A549 (cell line): ENCODE measurements at regions of chr15 and their contacts with region 1.

Region 1: DNA sequence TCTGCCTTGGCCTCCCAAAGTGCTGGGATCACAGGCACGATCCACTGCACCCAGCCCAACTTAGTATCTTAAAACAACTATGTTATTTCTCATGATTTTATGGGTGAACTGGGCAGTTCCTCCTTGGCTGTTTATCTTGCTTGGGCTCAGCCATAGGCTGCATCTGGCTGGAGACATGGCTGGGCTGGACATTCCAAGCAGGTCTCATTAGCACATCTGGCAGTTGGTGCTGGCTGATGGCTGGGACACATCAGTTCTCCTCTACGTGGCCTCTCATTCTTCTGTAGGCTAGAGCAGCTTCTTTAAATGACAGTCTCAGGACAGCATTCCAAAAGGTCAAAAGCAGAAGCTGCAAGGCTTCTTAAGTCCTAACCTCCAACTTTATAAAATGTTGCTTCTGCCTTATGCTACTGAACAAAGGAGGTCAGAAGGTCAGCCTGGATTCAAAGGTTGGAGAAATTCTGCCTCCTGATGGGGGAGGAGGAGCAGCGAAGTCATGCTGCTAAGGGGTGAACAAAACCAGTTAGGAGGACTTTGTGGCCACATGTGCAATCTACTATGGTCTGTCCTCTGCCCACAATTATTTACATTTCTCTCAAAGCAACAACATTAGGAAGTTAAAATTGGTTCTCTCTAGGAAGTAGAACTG is 144.0 kb downstream of the AQP9 start:
- DNase-seq: no peak
- ATAC-seq: no peak
- H3K4me3 ChIP-seq: no peak overlapping the region
- H3K27ac ChIP-seq: no peak overlapping the region; a peak in 1 of 6 replicates
- H3K4me1 ChIP-seq: 0 out of 3 replicates have a peak, but pooled peaks cover 8% of the 10 kb centered on the region
- CTCF ChIP-seq: no peak
- EP300 ChIP-seq: no peak
- POLR2A ChIP-seq: no peak
- RAD21 ChIP-seq: no peak

Region 2: DNA sequence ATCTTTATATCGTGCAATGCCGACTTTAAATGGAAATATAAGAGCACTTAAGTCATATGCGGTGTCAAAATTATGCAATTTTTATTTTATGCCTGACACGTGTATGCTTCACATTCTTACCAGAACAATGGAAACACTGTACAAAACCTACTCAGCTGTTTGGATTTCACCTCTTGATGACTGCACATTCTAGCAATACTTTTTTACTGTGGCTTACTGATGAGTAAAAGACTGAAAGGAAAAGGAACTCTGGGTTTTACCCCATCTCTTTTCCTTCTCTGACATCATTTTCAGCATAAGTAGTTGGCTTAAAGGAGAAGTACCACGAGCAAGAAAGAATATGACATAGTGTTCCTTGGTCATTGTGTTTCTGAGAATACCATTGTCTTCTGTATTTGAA is 432.9 kb before region 1 on chr15:
- CTCF ChIA-PET with region 1: no interaction called
- POLR2A ChIA-PET with region 1: no interaction called
- DNase-seq: no peak
- ATAC-seq: no peak
- H3K4me3 ChIP-seq: no peak overlapping the region
- H3K27ac ChIP-seq: no peak overlapping the region
- H3K4me1 ChIP-seq: no peaks in the 10 kb centered on the region
- CTCF ChIP-seq: no peak
- EP300 ChIP-seq: no peak
- POLR2A ChIP-seq: no peak
- RAD21 ChIP-seq: no peak

Region 3: DNA sequence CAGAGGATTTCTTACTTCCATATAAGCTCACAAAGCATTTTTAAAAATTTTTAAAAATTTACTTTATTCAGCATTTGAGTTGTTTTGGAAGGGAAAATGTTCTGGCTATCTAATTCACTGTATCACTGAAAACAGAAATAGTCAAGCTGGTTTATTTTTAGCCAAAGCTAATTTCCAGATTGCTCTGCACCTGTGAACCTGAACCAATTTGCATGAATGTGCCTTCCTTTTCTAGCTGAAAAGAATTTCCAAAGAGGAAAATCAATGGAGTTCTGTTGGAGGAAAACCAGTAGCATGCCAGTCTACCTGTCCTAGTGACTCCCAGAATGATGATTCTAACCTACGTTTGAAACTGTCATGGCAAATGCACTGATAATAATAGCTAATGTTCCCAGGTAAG is 15.5 kb after region 1 on chr15:
- CTCF ChIA-PET with region 1: interaction called, 8 read pairs
- POLR2A ChIA-PET with region 1: interaction called, 10 read pairs
- DNase-seq: no peak
- ATAC-seq: no peak
- H3K4me3 ChIP-seq: no peak overlapping the region
- H3K27ac ChIP-seq: no peak overlapping the region
- H3K4me1 ChIP-seq: no peaks in the 10 kb centered on the region
- CTCF ChIP-seq: no peak
- EP300 ChIP-seq: no peak
- POLR2A ChIP-seq: no peak
- RAD21 ChIP-seq: no peak

Region 4: DNA sequence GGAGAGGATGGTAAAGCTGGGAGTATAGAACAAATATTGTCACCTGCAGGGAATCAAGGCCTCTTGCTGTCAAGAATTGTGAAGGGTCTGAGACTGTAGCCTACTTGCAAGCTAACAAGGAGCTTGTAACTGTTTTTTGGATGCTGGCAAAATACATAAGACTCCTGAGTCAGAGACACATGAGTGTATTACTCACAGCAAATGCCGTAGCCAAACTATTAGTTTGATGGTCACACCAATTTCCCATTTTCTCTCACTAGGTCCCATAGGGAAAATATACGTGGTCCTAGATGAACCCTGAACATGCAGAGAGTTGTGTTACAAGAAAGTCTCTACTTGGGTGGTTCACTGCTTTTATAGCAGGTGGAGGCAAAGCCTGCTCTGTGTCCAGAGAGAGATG is 104.9 kb after region 1 on chr15:
- CTCF ChIA-PET with region 1: no interaction called
- POLR2A ChIA-PET with region 1: no interaction called
- DNase-seq: no peak
- ATAC-seq: peak in 1 of 2 experiments; percentile 60; a peak in 3 of 6 replicates
- H3K4me3 ChIP-seq: no peak overlapping the region
- H3K27ac ChIP-seq: peak overlapping the region in 1 of 2 experiments; percentile 46; a peak in 4 of 6 replicates
- H3K4me1 ChIP-seq: peaks cover 8% of the 10 kb centered on the region; the same call in 2 of the 3 replicates
- CTCF ChIP-seq: no peak
- EP300 ChIP-seq: no peak
- POLR2A ChIP-seq: no peak
- RAD21 ChIP-seq: no peak

Region 5: DNA sequence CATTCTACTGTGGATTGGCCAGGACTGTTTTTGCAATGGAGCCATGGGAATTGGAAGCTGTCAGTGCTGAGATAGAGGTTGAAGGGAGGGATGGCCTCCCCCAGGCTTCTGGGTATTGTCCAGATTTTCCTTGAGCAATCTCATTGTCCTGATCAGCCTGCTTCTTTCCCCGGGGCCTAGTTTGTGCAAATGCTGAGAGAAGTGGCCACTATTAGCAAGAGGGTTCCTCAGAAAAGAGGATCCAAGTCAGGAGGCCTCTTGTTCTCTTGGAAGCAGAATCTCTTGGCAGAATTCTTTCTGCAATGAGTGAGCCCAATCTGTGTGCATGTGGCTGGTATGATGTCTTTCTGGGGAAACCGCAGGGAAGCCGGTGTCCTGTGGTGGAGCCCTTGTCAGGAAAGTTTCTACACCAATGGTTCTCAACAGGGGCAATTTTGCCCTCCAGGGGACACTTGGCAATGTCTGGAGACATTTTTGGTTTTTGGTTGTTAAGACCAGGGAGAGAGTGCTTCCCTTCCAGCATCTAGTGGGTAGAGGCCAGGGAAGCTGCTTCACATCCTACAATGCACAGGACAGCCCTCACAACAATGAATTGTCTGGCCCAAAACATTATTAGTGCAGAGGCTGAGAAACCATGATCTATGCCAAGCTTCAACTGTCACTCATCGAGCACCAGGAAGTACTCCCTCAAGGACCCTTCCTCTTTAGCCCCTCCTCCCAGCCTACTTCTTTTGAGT is 151.6 kb after region 1 on chr15:
- CTCF ChIA-PET with region 1: no interaction called
- POLR2A ChIA-PET with region 1: no interaction called
- DNase-seq: no peak
- ATAC-seq: peak in 1 of 2 experiments; percentile 35; a peak in 4 of 6 replicates
- H3K4me3 ChIP-seq: no peak overlapping the region
- H3K27ac ChIP-seq: peak overlapping the region in 1 of 2 experiments; percentile 71; a peak in 3 of 6 replicates
- H3K4me1 ChIP-seq: peaks cover 43% of the 10 kb centered on the region
- CTCF ChIP-seq: no peak
- EP300 ChIP-seq: no peak
- POLR2A ChIP-seq: no peak
- RAD21 ChIP-seq: 0 out of 5 replicates have a peak, but pooled peaks of 1 of the 2 experiments have one; percentile 2